H1 (cell line): ENCODE measurements at regions of chr12 and their contacts with region 1.

Region 1: GRCh38 chr12:62934799-62935674 is at the start of gene PPM1H:
- DNase-seq: peak; percentile 82 to 94
- H3K4me3 ChIP-seq: peak within 1 kb of the TSS; percentile 68 to 88 (median 83)
- H3K27ac ChIP-seq: no peak within 1 kb of the TSS
- H3K4me1 ChIP-seq: peaks cover 0 to 13% (median 2%) of the 10 kb centered on the region in 4 experiments; a peak in 5 of 7 replicates
- H3K27me3 ChIP-seq: no peaks in the 10 kb centered on the region; a peak in 1 of 7 replicates
- CTCF ChIP-seq: peak; percentile 84 to 90 (median 89)
- EP300 ChIP-seq: peak in 1 of 2 experiments; percentile 84; a peak in 1 of 3 replicates
- POLR2A ChIP-seq: peak in 1 of 2 experiments; percentile 60; a peak in 2 of 3 replicates
- RAD21 ChIP-seq: peak; percentile 69 to 73
- total RNA-seq, gene PPM1H: 35.6 and 36.1 TPM in 2 replicates

Region 2: DNA sequence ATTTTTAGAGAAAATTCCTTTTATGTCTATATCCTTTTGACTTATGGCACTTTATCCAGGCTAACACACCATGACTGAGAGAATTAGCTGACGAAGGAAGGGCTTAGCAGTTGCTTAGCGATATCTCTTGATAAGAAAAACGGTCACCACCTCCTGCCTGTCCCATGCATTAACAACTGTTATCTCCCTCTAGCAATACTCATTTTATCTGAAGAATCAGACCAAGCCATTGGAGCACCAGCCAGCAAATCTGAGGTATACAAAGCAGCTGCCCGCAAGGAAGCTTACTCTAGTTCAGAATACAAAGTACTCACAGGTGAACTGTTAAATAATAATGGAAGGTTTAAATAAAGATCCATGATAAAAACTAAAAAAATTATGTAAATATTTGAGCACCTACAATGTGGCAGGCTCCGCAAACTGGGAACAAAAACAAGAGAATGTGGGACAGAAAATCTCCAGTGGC is 24.4 kb before region 1 on chr12:
- CTCF ChIA-PET with region 1: interaction called, 10 read pairs
- POLR2A ChIA-PET with region 1: interaction called, 10 read pairs
- DNase-seq: no peak
- H3K4me3 ChIP-seq: no peak overlapping the region
- H3K27ac ChIP-seq: no peak overlapping the region
- H3K4me1 ChIP-seq: peaks cover 2 to 22% (median 19%) of the 10 kb centered on the region in 4 experiments; a peak in 6 of 7 replicates
- H3K27me3 ChIP-seq: no peaks in the 10 kb centered on the region
- CTCF ChIP-seq: no peak
- EP300 ChIP-seq: no peak
- POLR2A ChIP-seq: no peak
- RAD21 ChIP-seq: no peak

Region 3: GRCh38 chr12:62919838-62920237 is 15.2 kb before region 1 on chr12:
- CTCF ChIA-PET with region 1: interaction called, 15 read pairs
- POLR2A ChIA-PET with region 1: interaction called, 8 read pairs
- DNase-seq: no peak
- H3K4me3 ChIP-seq: no peak overlapping the region
- H3K27ac ChIP-seq: no peak overlapping the region
- H3K4me1 ChIP-seq: peaks cover 2 to 17% (median 15%) of the 10 kb centered on the region in 4 experiments
- H3K27me3 ChIP-seq: no peaks in the 10 kb centered on the region
- CTCF ChIP-seq: no peak
- EP300 ChIP-seq: no peak
- POLR2A ChIP-seq: no peak
- RAD21 ChIP-seq: no peak

Region 4: DNA sequence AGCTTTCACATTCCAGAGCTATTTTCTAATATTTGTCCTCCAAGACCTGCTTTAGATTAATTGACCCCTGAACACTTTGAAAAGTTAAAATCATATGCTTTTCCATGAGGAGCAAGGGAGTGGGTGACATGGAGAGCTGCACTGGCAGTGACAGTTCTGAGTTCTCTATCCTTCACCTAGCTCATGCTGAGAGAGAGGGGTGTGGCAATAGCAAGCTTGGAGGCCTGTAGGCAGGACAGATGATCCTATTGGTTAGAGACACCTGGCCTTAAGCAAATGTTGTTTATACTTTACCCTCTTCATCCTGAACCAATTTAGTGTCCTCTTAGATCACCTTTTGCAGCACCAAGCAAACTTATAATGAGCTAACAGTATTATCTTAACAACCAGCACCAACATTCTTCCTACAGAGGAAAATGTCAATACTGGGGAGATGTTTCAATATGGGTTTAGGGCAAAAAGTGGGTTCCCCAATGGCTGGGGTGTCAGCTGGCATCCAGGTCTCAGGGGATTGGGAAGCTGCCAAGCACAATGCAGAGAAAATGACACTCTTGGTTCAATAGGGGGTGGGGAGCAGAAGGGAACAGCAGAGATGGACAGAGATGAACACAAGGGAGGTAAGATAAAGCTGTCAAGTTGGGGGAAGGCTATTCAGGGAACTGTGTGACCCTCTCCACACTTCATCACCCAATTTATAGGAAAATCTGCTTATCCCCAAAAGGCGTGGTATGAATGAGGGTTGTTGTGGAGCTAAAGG is 36.9 kb after region 1 on chr12:
- CTCF ChIA-PET with region 1: interaction called, 14 read pairs
- POLR2A ChIA-PET with region 1: no interaction called
- DNase-seq: no peak
- H3K4me3 ChIP-seq: no peak overlapping the region
- H3K27ac ChIP-seq: no peak overlapping the region
- H3K4me1 ChIP-seq: no peaks in the 10 kb centered on the region
- H3K27me3 ChIP-seq: no peaks in the 10 kb centered on the region; a peak in 1 of 7 replicates
- CTCF ChIP-seq: no peak
- EP300 ChIP-seq: no peak
- POLR2A ChIP-seq: no peak
- RAD21 ChIP-seq: no peak

Region 5: DNA sequence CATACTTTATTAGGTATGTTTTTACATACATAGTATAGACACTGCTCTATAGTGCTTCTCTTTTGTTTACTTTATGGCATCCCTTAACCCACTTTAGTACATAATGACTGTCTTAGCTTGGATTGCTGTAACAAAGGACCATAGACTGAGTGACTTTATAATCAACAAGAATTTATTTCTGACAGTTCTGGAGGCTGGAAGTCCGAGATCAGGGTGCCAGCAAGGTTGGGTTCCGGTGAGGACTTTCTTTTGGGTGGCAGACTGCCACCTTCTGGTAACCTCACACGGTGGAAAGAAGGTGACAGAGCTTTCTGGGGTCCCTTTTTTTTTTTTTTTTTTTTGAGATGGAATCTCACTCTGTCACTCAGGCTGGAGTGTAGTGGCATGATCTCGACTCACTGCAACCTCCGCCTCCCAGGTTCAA is 48.6 kb after region 1 on chr12:
- CTCF ChIA-PET with region 1: interaction called, 11 read pairs
- POLR2A ChIA-PET with region 1: no interaction called
- DNase-seq: peak in 1 of 2 experiments; percentile 2
- H3K4me3 ChIP-seq: no peak overlapping the region
- H3K27ac ChIP-seq: no peak overlapping the region
- H3K4me1 ChIP-seq: no peaks in the 10 kb centered on the region
- H3K27me3 ChIP-seq: no peaks in the 10 kb centered on the region
- CTCF ChIP-seq: peak; percentile 32 to 54 (median 41); a peak in 3 of 4 replicates
- EP300 ChIP-seq: no peak
- POLR2A ChIP-seq: no peak
- RAD21 ChIP-seq: peak; percentile 55 to 68

Region 6: DNA sequence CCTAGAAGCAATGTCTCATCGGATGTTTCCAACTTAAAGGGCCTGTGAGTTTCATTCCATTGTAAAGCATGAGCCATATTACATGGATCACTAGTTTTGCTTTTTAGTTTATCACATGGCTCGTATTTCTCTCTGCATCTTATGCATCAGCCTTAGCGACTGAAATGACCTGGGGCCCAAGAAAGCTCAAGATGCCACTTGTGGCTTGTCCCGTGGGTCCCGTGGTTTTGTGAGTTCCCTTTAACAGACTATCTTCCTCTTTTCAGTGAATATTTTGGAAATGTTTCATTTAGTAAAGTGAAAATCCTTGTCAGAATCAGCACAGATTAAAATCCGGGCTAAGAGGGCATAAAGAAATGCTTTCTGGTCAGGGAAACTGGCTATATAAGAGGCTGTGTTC is 86.1 kb after region 1 on chr12:
- CTCF ChIA-PET with region 1: interaction called, 10 read pairs
- POLR2A ChIA-PET with region 1: no interaction called
- DNase-seq: no peak
- H3K4me3 ChIP-seq: peak overlapping the region in 1 of 4 experiments; percentile 37; a peak in 2 of 8 replicates
- H3K27ac ChIP-seq: no peak overlapping the region
- H3K4me1 ChIP-seq: peaks cover 0 to 15% (median 11%) of the 10 kb centered on the region in 4 experiments; a peak in 5 of 7 replicates
- H3K27me3 ChIP-seq: no peaks in the 10 kb centered on the region
- CTCF ChIP-seq: no peak
- EP300 ChIP-seq: no peak
- POLR2A ChIP-seq: no peak
- RAD21 ChIP-seq: no peak